Calu3 (cell line): ENCODE measurements at regions of chr11 and their contacts with region 1.

Region 1: DNA sequence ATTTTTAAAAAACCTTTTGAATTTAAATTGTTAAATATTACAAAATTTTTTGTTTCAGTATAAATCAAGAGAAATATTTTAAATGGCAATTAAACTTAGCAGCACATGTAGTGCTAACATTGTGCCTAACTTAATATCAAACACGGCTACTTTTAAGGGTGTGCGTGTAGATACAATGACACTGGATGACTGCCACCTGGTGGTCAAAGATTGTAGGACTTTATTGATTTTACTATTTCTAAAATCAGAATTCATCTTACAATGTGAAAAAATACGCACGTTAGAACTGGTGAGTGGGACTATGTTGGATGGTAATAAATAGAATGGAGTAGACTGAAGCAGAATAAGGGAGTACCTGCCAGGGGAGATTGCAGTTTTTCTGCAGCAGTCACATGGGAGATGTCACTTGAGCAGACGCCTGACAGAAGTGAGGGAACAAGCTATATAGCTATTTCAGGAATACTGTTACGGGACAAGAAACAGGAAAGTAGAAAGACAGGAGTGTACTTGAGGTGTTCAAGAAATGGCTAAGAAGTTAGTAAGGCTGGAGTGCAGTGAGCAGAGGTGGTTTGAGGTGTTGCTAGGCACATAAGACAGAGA is 52.9 kb downstream of the UVRAG start:
- DNase-seq: peak; percentile 48
- H3K4me3 Mint-ChIP-seq: no peak overlapping the region
- H3K27ac Mint-ChIP-seq: no peak overlapping the region
- H3K4me1 Mint-ChIP-seq: peaks cover 21% of the 10 kb centered on the region
- H3K27me3 Mint-ChIP-seq: no peaks in the 10 kb centered on the region
- CTCF ChIP-seq: peak; percentile 30

Region 2: GRCh38 chr11:75547580-75548058 is 320.3 kb before region 1 on chr11:
- CTCF ChIA-PET with region 1: no interaction called
- intact Hi-C with region 1: loop called (anchors 5 kb)
- DNase-seq: peak; percentile 68
- H3K4me3 Mint-ChIP-seq: no peak overlapping the region
- H3K27ac Mint-ChIP-seq: no peak overlapping the region
- H3K4me1 Mint-ChIP-seq: no peaks in the 10 kb centered on the region
- H3K27me3 Mint-ChIP-seq: peaks cover 35% of the 10 kb centered on the region
- CTCF ChIP-seq: peak; percentile 84

Region 3: GRCh38 chr11:75721855-75722668 is 145.8 kb before region 1 on chr11:
- CTCF ChIA-PET with region 1: interaction called, 6 read pairs
- intact Hi-C with region 1: loop called (anchors 1 kb)
- DNase-seq: no peak
- H3K4me3 Mint-ChIP-seq: no peak overlapping the region
- H3K27ac Mint-ChIP-seq: no peak overlapping the region
- H3K4me1 Mint-ChIP-seq: peaks cover 4% of the 10 kb centered on the region
- H3K27me3 Mint-ChIP-seq: peaks cover 8% of the 10 kb centered on the region
- CTCF ChIP-seq: no peak

Region 4: DNA sequence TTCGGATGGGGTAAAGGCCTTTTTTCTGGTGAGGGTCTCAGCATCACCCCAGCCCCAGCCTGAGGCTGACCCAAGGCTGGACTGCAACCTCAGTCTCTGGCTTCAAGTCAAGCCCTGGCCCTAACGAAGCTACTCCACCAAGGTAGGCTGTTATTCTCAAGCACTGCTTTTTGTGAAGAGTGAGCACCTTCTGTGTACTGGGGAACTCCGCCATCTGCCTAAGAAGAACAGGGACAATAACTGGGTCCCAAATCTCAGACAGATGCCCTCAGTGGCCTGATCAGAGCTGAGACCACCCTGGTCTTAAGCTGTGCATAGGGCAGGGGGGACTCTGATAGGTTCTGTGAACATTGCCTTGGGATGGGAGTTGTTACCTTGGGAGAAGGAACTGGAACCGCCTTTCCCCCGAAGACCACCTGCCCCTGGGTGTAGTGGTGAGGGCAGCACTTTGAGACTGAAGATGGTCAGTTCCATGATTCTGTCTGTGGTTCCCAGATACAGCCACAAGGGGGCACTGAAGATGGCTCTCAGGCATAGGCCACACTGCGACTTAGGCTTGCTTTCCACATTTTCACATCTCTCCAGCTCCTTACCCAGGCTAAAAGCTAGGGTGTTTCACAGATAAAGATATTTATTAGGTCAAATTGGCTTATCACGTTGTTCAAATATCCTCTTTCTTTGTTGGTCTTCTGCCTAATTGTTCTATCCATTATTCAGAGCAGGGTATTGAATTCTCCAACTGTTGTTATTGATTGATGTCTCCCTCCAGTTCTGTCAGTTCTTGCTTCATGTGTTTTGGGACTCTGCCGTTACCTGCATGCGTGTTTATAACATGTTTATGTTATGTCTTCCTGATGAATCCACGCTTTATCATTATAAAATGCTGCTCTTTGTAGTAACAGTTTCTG is 64.7 kb before region 1 on chr11:
- CTCF ChIA-PET with region 1: interaction called, 15 read pairs
- intact Hi-C with region 1: loop called (anchors 1 kb)
- DNase-seq: peak; percentile 79
- H3K4me3 Mint-ChIP-seq: no peak overlapping the region
- H3K27ac Mint-ChIP-seq: no peak overlapping the region
- H3K4me1 Mint-ChIP-seq: no peaks in the 10 kb centered on the region
- H3K27me3 Mint-ChIP-seq: no peaks in the 10 kb centered on the region
- CTCF ChIP-seq: peak; percentile 83

Region 5: GRCh38 chr11:75814686-75815344 is 53.1 kb before region 1 on chr11 and contains the start of gene UVRAG:
- CTCF ChIA-PET with region 1: no interaction called
- intact Hi-C with region 1: loop called (anchors 5 kb)
- DNase-seq: peak; percentile 98
- H3K4me3 Mint-ChIP-seq: no peak within 1 kb of the TSS
- H3K27ac Mint-ChIP-seq: peak within 1 kb of the TSS; percentile 92
- H3K4me1 Mint-ChIP-seq: peaks cover 12% of the 10 kb centered on the region
- H3K27me3 Mint-ChIP-seq: no peaks in the 10 kb centered on the region
- CTCF ChIP-seq: no peak
- total RNA-seq, gene UVRAG: 18.5 and 26.6 TPM in 2 replicates

Region 6: GRCh38 chr11:75836417-75836816 is 31.5 kb before region 1 on chr11:
- CTCF ChIA-PET with region 1: no interaction called
- intact Hi-C with region 1: no loop called
- DNase-seq: no peak
- H3K4me3 Mint-ChIP-seq: no peak overlapping the region
- H3K27ac Mint-ChIP-seq: no peak overlapping the region
- H3K4me1 Mint-ChIP-seq: peaks cover 10% of the 10 kb centered on the region
- H3K27me3 Mint-ChIP-seq: no peaks in the 10 kb centered on the region
- CTCF ChIP-seq: no peak